ENCODE measurements at regions of chr9 and their contacts with region 1.

Region 1: GRCh38 chr9:20622330-20623020 is at the start of gene MLLT3:
- DNase-seq: peak; percentile 95 to 98 (median 97)
- ATAC-seq: peak; percentile 73
- H3K4me3 ChIP-seq: peak within 1 kb of the TSS; percentile 97
- H3K4me3 Mint-ChIP-seq: peak within 1 kb of the TSS; percentile 93
- H3K27ac ChIP-seq: peak within 1 kb of the TSS; percentile 79 to 92
- H3K27ac Mint-ChIP-seq: peak within 1 kb of the TSS; percentile 93
- H3K4me1 ChIP-seq: peaks cover 24% of the 10 kb centered on the region
- H3K4me1 Mint-ChIP-seq: peaks cover 46% of the 10 kb centered on the region
- H3K27me3 ChIP-seq: no peaks in the 10 kb centered on the region
- H3K27me3 Mint-ChIP-seq: no peaks in the 10 kb centered on the region
- CTCF ChIP-seq: no peak
- total RNA-seq, gene MLLT3: 59.2 to 60.6 TPM

Region 2: DNA sequence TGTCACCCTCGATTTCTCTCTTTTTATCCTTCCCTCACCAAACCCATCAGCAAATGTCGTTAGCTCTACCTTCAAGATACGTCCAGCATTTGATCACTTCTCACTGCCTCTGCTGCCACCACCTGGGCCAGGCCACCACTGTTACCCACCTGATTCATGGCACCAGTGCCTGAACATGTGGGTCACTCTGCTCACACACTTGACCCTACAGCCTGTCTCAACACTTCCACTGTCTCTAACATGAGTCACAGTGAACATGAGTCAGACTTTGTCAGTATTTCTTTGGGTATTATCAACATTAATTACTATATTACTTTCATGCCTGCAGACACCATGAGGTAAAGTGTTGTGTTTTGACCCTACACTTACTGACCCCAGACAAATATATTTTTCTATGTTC is 853.3 kb before region 1 on chr9:
- CTCF ChIA-PET with region 1: no interaction called
- POLR2A ChIA-PET with region 1: no interaction called
- intact Hi-C with region 1: no loop called
- DNase-seq: no peak
- ATAC-seq: no peak
- H3K4me3 ChIP-seq: no peak overlapping the region
- H3K4me3 Mint-ChIP-seq: no peak overlapping the region
- H3K27ac ChIP-seq: no peak overlapping the region
- H3K27ac Mint-ChIP-seq: no peak overlapping the region
- H3K4me1 ChIP-seq: no peaks in the 10 kb centered on the region
- H3K4me1 Mint-ChIP-seq: no peaks in the 10 kb centered on the region
- H3K27me3 ChIP-seq: no peaks in the 10 kb centered on the region
- H3K27me3 Mint-ChIP-seq: peaks cover 17% of the 10 kb centered on the region
- CTCF ChIP-seq: no peak

Region 3: DNA sequence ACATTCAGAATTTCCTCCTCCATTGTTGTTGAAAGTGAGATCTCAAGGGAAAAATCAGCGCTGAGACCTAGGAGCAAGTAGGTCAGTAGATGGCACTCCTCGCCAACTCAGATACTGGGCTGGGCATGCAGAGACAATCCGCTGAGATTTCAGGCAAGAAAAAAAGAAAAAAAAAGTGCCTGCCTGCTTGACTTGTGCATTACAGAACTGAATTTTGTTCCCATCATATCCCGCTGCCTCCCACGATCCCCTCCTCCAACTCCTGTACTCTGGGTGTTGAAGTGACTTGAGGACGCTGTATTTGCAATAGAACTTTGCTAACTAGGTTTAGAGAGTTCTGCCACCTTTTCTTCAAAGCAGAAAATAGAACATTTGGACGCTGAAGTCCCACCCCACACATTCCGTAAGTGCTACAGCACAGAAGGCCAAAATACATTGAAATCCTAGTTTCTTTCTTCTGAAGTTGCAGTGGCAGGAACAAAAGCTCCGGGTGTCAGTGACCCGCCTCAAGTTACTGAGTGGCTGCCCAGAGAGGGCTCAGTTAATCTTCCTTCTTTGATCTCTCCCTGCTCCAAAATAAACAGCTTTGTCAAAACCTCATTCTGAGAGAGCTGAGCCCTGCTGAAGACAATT is 266.0 kb before region 1 on chr9:
- CTCF ChIA-PET with region 1: interaction called, 3 read pairs
- POLR2A ChIA-PET with region 1: interaction called, 3 read pairs
- intact Hi-C with region 1: loop called (anchors 5 kb)
- DNase-seq: peak; percentile 35 to 76 (median 47)
- ATAC-seq: peak; percentile 86
- H3K4me3 ChIP-seq: no peak overlapping the region
- H3K4me3 Mint-ChIP-seq: no peak overlapping the region
- H3K27ac ChIP-seq: no peak overlapping the region
- H3K27ac Mint-ChIP-seq: peak overlapping the region; percentile 45
- H3K4me1 ChIP-seq: peaks cover 5% of the 10 kb centered on the region
- H3K4me1 Mint-ChIP-seq: peaks cover 42% of the 10 kb centered on the region
- H3K27me3 ChIP-seq: no peaks in the 10 kb centered on the region
- H3K27me3 Mint-ChIP-seq: no peaks in the 10 kb centered on the region
- CTCF ChIP-seq: peak; percentile 60

Region 4: GRCh38 chr9:20447291-20447690 is 175.2 kb before region 1 on chr9:
- CTCF ChIA-PET with region 1: no interaction called
- POLR2A ChIA-PET with region 1: no interaction called
- intact Hi-C with region 1: no loop called
- DNase-seq: no peak
- ATAC-seq: no peak
- H3K4me3 ChIP-seq: no peak overlapping the region
- H3K4me3 Mint-ChIP-seq: no peak overlapping the region
- H3K27ac ChIP-seq: no peak overlapping the region
- H3K27ac Mint-ChIP-seq: no peak overlapping the region
- H3K4me1 ChIP-seq: no peaks in the 10 kb centered on the region
- H3K4me1 Mint-ChIP-seq: peaks cover 29% of the 10 kb centered on the region
- H3K27me3 ChIP-seq: no peaks in the 10 kb centered on the region
- H3K27me3 Mint-ChIP-seq: no peaks in the 10 kb centered on the region
- CTCF ChIP-seq: no peak

Region 5: GRCh38 chr9:20508242-20508641 is 114.2 kb before region 1 on chr9:
- CTCF ChIA-PET with region 1: interaction called, 3 read pairs
- POLR2A ChIA-PET with region 1: interaction called, 9 read pairs
- intact Hi-C with region 1: loop called in 1 of 2 experiments (anchors 5 kb)
- DNase-seq: peak in 2 of 14 experiments; percentile 12 to 19
- ATAC-seq: peak; percentile 43
- H3K4me3 ChIP-seq: no peak overlapping the region
- H3K4me3 Mint-ChIP-seq: peak overlapping the region; percentile 46
- H3K27ac ChIP-seq: no peak overlapping the region
- H3K27ac Mint-ChIP-seq: peak overlapping the region; percentile 81
- H3K4me1 ChIP-seq: peaks cover 15% of the 10 kb centered on the region
- H3K4me1 Mint-ChIP-seq: peaks cover 83% of the 10 kb centered on the region
- H3K27me3 ChIP-seq: no peaks in the 10 kb centered on the region
- H3K27me3 Mint-ChIP-seq: no peaks in the 10 kb centered on the region
- CTCF ChIP-seq: no peak

Region 6: GRCh38 chr9:20582150-20582549 is 40.3 kb before region 1 on chr9:
- CTCF ChIA-PET with region 1: interaction called, 3 read pairs
- POLR2A ChIA-PET with region 1: no interaction called
- intact Hi-C with region 1: loop called in 1 of 2 experiments (anchors 5 kb)
- DNase-seq: no peak
- ATAC-seq: no peak
- H3K4me3 ChIP-seq: no peak overlapping the region
- H3K4me3 Mint-ChIP-seq: no peak overlapping the region
- H3K27ac ChIP-seq: no peak overlapping the region
- H3K27ac Mint-ChIP-seq: peak overlapping the region; percentile 25
- H3K4me1 ChIP-seq: peaks cover 12% of the 10 kb centered on the region
- H3K4me1 Mint-ChIP-seq: peaks cover 85% of the 10 kb centered on the region
- H3K27me3 ChIP-seq: no peaks in the 10 kb centered on the region
- H3K27me3 Mint-ChIP-seq: no peaks in the 10 kb centered on the region
- CTCF ChIP-seq: no peak

Region 7: DNA sequence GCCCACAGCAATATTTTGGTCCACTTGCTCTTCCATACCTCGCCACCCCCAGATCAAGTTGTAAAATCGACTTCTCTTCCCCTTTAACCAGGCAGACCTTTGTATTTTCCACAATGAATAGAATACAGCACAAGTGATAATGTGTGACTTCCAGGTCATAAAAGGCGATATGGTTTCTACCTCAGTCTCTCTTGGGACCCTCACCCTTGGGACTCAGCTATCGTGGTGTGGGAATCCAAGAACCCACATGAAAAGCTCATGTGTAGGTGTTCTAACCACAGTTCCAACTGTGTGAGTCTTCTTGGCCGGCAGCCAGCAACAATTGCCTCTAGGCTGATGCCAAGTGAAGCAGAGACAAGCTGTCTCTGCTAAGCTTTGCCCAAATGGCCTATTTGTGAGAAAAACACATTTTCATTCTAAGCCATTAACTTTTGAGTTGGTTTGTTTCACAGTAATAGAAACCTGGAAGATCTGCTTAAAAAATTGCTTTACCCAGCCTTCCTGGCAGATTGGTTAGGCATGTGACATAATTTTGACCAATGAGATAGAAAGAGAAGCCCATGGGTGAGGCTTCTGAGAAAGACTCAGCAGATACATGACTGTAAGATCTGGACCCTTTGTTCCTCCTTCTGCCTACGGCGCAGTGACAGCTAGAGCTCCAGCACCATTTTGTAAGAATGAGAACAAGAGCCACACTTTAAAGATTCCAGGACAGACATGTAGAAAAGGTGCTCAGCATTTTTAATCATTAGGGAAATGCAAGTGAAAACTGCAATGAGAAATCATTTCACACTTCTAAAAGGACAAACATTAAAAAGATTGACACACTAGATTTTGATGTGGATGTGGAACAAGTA is 18.1 kb after region 1 on chr9:
- CTCF ChIA-PET with region 1: interaction called, 8 read pairs
- POLR2A ChIA-PET with region 1: interaction called, 18 read pairs
- intact Hi-C with region 1: loop called in 1 of 2 experiments (anchors 2 kb)
- DNase-seq: peak; percentile 63 to 92 (median 80)
- ATAC-seq: peak; percentile 86
- H3K4me3 ChIP-seq: peak overlapping the region; percentile 3
- H3K4me3 Mint-ChIP-seq: peak overlapping the region; percentile 26
- H3K27ac ChIP-seq: no peak overlapping the region
- H3K27ac Mint-ChIP-seq: peak overlapping the region; percentile 13
- H3K4me1 ChIP-seq: peaks cover 11% of the 10 kb centered on the region
- H3K4me1 Mint-ChIP-seq: peaks cover 15% of the 10 kb centered on the region
- H3K27me3 ChIP-seq: no peaks in the 10 kb centered on the region
- H3K27me3 Mint-ChIP-seq: no peaks in the 10 kb centered on the region
- CTCF ChIP-seq: no peak

Region 8: DNA sequence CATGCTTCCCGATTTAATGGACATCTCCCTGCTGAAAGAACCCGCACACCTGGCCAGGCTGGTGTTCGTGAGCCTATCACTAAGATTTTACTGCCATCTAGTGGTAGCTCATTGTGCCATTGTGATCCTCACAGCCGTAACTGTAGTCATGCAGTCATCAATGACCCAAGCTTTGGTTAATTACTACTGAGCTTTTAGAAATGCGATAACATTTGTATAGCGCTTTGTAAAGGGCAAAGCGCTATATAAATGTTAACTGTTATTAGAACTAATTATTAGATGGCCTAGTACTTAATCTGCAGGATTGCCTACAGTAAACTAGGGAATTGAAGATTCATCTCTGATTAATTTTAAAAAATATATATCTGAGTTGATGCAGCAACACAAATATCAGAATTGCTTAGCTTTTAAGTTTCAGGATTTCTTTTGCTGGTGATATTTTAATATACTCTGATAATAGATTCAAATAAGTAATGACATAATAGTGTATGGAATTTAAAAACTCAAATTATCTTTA is 318.8 kb after region 1 on chr9:
- CTCF ChIA-PET with region 1: interaction called, 14 read pairs
- POLR2A ChIA-PET with region 1: interaction called, 4 read pairs
- intact Hi-C with region 1: loop called (anchors 1 kb)
- DNase-seq: peak; percentile 16 to 83 (median 37)
- ATAC-seq: peak; percentile 93
- H3K4me3 ChIP-seq: no peak overlapping the region
- H3K4me3 Mint-ChIP-seq: no peak overlapping the region
- H3K27ac ChIP-seq: no peak overlapping the region
- H3K27ac Mint-ChIP-seq: no peak overlapping the region
- H3K4me1 ChIP-seq: peaks cover 2% of the 10 kb centered on the region
- H3K4me1 Mint-ChIP-seq: peaks cover 4% of the 10 kb centered on the region
- H3K27me3 ChIP-seq: no peaks in the 10 kb centered on the region
- H3K27me3 Mint-ChIP-seq: no peaks in the 10 kb centered on the region
- CTCF ChIP-seq: peak; percentile 91

Region 9: DNA sequence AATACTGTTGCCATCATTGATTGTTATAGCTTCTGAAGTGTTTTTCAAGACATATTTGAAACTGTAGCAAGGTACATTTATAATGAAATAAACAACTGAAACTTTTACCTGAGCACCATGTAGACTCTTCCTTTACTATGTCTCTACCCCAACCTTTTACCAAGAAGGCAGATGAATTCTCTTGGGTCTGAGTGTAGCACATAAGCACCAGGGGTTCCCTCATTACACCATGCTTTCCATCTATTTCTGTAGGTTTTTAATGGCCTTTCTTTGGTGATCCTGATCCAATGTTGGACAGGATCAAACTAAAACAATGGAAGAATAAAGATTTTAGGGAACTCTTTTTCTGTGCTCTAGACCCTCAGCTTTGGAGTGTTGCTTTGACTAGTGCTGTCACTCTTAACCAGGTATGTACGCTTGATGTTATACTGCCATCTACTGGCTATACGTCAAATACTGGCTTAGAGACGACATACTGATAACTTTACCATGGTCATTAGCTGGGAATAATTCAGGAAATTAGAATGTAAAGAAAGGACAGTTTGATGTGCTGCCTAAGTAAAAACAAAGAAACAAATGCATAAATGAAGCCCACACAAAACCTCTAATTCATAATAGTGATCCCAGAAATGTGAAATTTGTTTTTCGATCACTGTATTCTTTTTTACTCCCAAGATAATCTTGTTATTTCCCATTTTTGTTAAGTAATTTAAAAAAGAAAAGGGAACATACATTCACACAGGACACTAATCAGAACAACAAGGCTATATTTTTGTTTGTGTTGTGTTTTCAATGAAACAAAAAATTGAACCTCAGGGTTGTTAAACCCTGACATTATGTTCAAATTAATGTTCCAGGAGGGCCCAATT is 488.5 kb after region 1 on chr9:
- CTCF ChIA-PET with region 1: interaction called, 3 read pairs
- POLR2A ChIA-PET with region 1: no interaction called
- intact Hi-C with region 1: loop called (anchors 1 to 5 kb)
- DNase-seq: peak in 5 of 14 experiments; percentile 10 to 84 (median 78)
- ATAC-seq: peak; percentile 89
- H3K4me3 ChIP-seq: no peak overlapping the region
- H3K4me3 Mint-ChIP-seq: no peak overlapping the region
- H3K27ac ChIP-seq: no peak overlapping the region
- H3K27ac Mint-ChIP-seq: no peak overlapping the region
- H3K4me1 ChIP-seq: no peaks in the 10 kb centered on the region
- H3K4me1 Mint-ChIP-seq: no peaks in the 10 kb centered on the region
- H3K27me3 ChIP-seq: no peaks in the 10 kb centered on the region
- H3K27me3 Mint-ChIP-seq: peaks cover 6% of the 10 kb centered on the region
- CTCF ChIP-seq: peak; percentile 92

Measured in CD4-positive, alpha-beta T cell (primary cell).